GM12878 (cell line): ENCODE measurements at regions of chr6 and their contacts with region 1.

Region 1: GRCh38 chr6:71982389-71982788 is 96.0 kb downstream of the RIMS1 start:
- DNase-seq: peak; percentile 32
- ATAC-seq: peak; percentile 87
- H3K4me3 ChIP-seq: no peak overlapping the region
- H3K27ac ChIP-seq: peak overlapping the region; percentile 13; the same call in 1 of the 2 replicates
- H3K4me1 ChIP-seq: no peaks in the 10 kb centered on the region
- H3K27me3 ChIP-seq: no peaks in the 10 kb centered on the region
- CTCF ChIP-seq: no peak
- EP300 ChIP-seq: no peak
- POLR2A ChIP-seq: no peak
- RAD21 ChIP-seq: no peak

Region 2: GRCh38 chr6:71908162-71908765 is 74.1 kb before region 1 on chr6:
- CTCF ChIA-PET with region 1: no interaction called
- POLR2A ChIA-PET with region 1: no interaction called
- RAD21 ChIA-PET with region 1: no interaction called
- SMC1A ChIA-PET with region 1: no interaction called
- in situ Hi-C with region 1: no loop called
- intact Hi-C with region 1: loop called (anchors 5 kb)
- DNase-seq: peak; percentile 16
- ATAC-seq: peak; percentile 92
- H3K4me3 ChIP-seq: no peak overlapping the region
- H3K27ac ChIP-seq: no peak overlapping the region
- H3K4me1 ChIP-seq: no peaks in the 10 kb centered on the region
- H3K27me3 ChIP-seq: no peaks in the 10 kb centered on the region
- CTCF ChIP-seq: no peak
- EP300 ChIP-seq: no peak
- POLR2A ChIP-seq: no peak
- RAD21 ChIP-seq: no peak